Activated T-helper 1 cell treated with anti-CD3 and anti-CD28 coated beads, Interleukin-12 subunit alpha, Interleukin-12 subunit beta, Interleukin-2, Interleukin-4 antibody, amounts not matched to agents 30 ng/mL and 10 ng/mL and 1 ng/mL, durations not matched to agents 14 hours and 24 hours and 36 hours (primary cell): ENCODE measurements at regions of chr9 and their contacts with region 1.

Region 1: GRCh38 chr9:99807276-99807852 is 14.3 kb upstream of the NR4A3 start:
- DNase-seq: peak; percentile 43
- H3K4me3 Mint-ChIP-seq: no peak overlapping the region
- H3K27ac Mint-ChIP-seq: no peak overlapping the region
- H3K4me1 Mint-ChIP-seq: peaks cover 37% of the 10 kb centered on the region
- H3K27me3 Mint-ChIP-seq: peaks cover 26% of the 10 kb centered on the region

Region 2: DNA sequence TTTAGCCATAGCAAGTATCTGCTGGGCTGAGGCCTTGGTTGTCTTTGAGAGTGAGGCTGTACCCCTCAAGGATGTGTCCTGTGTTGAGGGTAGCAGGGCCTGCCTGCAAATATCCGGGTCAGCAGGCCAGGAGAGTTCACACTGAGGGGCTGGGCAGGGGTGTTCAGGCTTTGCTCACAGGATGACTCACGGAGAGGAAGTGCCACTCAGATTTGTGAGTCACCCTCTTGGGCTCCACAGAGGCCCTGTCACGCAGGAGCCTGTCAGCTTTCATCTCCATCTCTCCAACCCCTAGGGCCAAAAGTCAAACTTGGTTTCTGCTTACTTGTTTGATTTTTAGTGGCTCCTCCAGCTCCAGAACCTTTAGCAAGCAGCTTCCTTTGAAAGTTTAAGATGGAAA is 373.8 kb before region 1 on chr9:
- intact Hi-C with region 1: loop called (anchors 5 kb)
- DNase-seq: peak; percentile 47
- H3K4me3 Mint-ChIP-seq: no peak overlapping the region
- H3K27ac Mint-ChIP-seq: peak overlapping the region; percentile 76
- H3K4me1 Mint-ChIP-seq: peaks cover 18% of the 10 kb centered on the region
- H3K27me3 Mint-ChIP-seq: no peaks in the 10 kb centered on the region

Region 3: DNA sequence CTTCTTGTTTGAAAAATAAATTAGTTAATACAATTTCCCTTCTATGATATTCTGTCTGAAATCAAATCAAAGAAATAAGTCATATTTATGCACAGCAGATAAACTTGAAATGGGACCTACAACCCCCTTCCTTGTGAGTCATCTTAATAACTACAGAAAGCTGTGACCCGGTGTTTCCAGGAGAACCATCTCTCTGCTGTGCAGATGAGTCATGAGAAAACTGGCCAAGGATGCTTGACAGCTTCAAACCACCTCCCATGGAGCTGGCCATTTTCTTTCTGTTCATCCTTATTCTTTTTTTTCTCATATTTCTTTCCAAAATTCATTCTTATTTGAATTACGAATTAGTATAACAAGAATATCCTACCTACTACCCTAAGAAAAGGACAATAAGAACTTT is 29.1 kb before region 1 on chr9:
- intact Hi-C with region 1: loop called (anchors 2 kb)
- DNase-seq: no peak
- H3K4me3 Mint-ChIP-seq: no peak overlapping the region
- H3K27ac Mint-ChIP-seq: no peak overlapping the region
- H3K4me1 Mint-ChIP-seq: no peaks in the 10 kb centered on the region
- H3K27me3 Mint-ChIP-seq: peaks cover 8% of the 10 kb centered on the region

Region 4: DNA sequence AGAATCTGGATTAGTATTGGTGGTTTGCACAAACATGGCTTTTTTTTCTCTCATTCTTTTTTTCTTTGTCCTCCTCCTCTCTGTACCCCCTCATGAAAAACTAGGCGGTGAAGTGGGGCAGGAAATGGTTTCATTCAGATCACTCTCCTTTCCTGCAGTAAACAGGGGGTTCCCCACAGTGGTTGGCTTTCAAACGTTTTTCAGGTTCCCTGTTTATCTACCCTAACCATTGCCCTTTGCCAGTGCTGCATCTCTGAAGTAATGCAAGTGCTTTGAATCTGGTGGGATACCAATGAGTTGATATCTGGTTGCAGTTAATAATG is 44.1 kb after region 1 on chr9:
- intact Hi-C with region 1: loop called (anchors 2 kb)
- DNase-seq: peak; percentile 64
- H3K4me3 Mint-ChIP-seq: peak overlapping the region; percentile 38
- H3K27ac Mint-ChIP-seq: peak overlapping the region; percentile 77
- H3K4me1 Mint-ChIP-seq: peaks cover 62% of the 10 kb centered on the region
- H3K27me3 Mint-ChIP-seq: peaks cover 4% of the 10 kb centered on the region

Region 5: GRCh38 chr9:100011062-100011681 is 203.8 kb after region 1 on chr9:
- intact Hi-C with region 1: loop called (anchors 1 kb)
- DNase-seq: peak; percentile 23
- H3K4me3 Mint-ChIP-seq: no peak overlapping the region
- H3K27ac Mint-ChIP-seq: no peak overlapping the region
- H3K4me1 Mint-ChIP-seq: no peaks in the 10 kb centered on the region
- H3K27me3 Mint-ChIP-seq: no peaks in the 10 kb centered on the region

Region 6: GRCh38 chr9:100277166-100277979 is 470.0 kb after region 1 on chr9:
- intact Hi-C with region 1: no loop called
- DNase-seq: no peak
- H3K4me3 Mint-ChIP-seq: no peak overlapping the region
- H3K27ac Mint-ChIP-seq: no peak overlapping the region
- H3K4me1 Mint-ChIP-seq: no peaks in the 10 kb centered on the region
- H3K27me3 Mint-ChIP-seq: no peaks in the 10 kb centered on the region

Region 7: GRCh38 chr9:100322954-100323536 is 515.7 kb after region 1 on chr9:
- intact Hi-C with region 1: loop called (anchors 5 kb)
- DNase-seq: no peak
- H3K4me3 Mint-ChIP-seq: no peak overlapping the region
- H3K27ac Mint-ChIP-seq: no peak overlapping the region
- H3K4me1 Mint-ChIP-seq: peaks cover 5% of the 10 kb centered on the region
- H3K27me3 Mint-ChIP-seq: no peaks in the 10 kb centered on the region